CD4-positive, alpha-beta memory T cell (primary cell): ENCODE measurements at regions of chr19 and their contacts with region 1.

Region 1: GRCh38 chr19:5904352-5905113 is at the start of gene VMAC:
- DNase-seq: peak; percentile 100
- H3K4me3 ChIP-seq: peak within 1 kb of the TSS; percentile 97
- H3K4me3 Mint-ChIP-seq: peak within 1 kb of the TSS; percentile 91 to 97 (median 95)
- H3K27ac ChIP-seq: peak within 1 kb of the TSS; percentile 95
- H3K27ac Mint-ChIP-seq: peak within 1 kb of the TSS; percentile 95 to 100 (median 100)
- H3K4me1 ChIP-seq: peaks cover 37% of the 10 kb centered on the region
- H3K4me1 Mint-ChIP-seq: peaks cover 14 to 57% (median 35%) of the 10 kb centered on the region in 4 donors
- H3K27me3 ChIP-seq: no peaks in the 10 kb centered on the region
- H3K27me3 Mint-ChIP-seq: no peaks in the 10 kb centered on the region
- total RNA-seq, gene VMAC: 36.6 to 37.5 TPM

Region 2: DNA sequence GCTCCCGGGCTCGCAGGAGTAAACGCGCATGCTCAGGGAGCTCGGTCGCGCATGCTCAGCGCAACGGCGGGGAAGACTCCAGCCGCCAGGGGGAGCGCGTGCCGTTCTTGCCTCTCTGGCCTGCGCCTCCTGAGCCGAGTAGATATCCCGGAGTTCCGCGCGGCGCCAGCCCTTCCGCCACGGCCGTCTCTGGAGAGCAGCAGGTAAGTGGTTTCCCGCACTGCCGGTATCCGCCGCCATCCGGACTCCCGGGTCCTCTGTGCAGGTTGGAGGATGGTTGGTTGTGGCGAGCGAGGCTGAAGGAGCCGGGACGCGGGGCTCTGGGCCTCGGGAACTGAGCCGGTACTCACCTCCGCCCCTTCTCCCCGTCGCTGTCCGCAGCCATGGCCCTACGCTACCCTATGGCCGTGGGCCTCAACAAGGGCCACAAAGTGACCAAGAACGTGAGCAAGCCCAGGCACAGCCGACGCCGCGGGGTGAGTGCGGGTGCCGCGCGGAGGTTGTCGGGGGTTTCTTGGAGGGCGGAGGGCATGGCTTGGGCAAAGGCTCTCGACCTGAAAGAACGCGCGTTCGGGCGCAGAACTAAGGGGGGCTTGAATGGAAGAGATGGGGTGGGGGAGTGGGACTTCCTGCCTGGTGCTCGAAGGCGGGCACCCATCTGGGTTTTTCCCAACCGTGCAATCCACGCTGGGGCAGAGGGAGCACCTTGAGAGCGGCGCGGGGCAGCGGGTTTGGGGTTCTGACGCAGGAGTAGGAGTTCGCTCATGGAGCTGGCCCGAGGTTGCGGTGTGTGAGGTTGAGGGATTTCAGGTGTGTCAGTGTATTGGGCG is 214.2 kb before region 1 on chr19 and contains the start of gene RPL36:
- CTCF ChIA-PET with region 1: interaction called, 3 read pairs
- POLR2A ChIA-PET with region 1: interaction called, 7 read pairs
- intact Hi-C with region 1: loop called (anchors 1 kb)
- DNase-seq: peak; percentile 97 to 99 (median 98)
- H3K4me3 ChIP-seq: peak within 1 kb of the TSS; percentile 84 to 86
- H3K4me3 Mint-ChIP-seq: peak within 1 kb of the TSS; percentile 92 to 97 (median 94)
- H3K27ac ChIP-seq: peak within 1 kb of the TSS; percentile 83
- H3K27ac Mint-ChIP-seq: peak within 1 kb of the TSS; percentile 94 to 100 (median 97)
- H3K4me1 ChIP-seq: peaks cover 36% of the 10 kb centered on the region
- H3K4me1 Mint-ChIP-seq: peaks cover 19 to 46% (median 31%) of the 10 kb centered on the region in 4 donors
- H3K27me3 ChIP-seq: no peaks in the 10 kb centered on the region
- H3K27me3 Mint-ChIP-seq: no peaks in the 10 kb centered on the region
- total RNA-seq, gene RPL36: 1,675 to 1,762 TPM

Region 3: GRCh38 chr19:5803752-5804515 is 100.6 kb before region 1 on chr19:
- CTCF ChIA-PET with region 1: interaction called, 16 read pairs
- POLR2A ChIA-PET with region 1: interaction called, 13 read pairs
- intact Hi-C with region 1: loop called (anchors 1 kb)
- DNase-seq: peak; percentile 89 to 93 (median 91)
- H3K4me3 ChIP-seq: peak overlapping the region in 1 of 2 donors; percentile 40
- H3K4me3 Mint-ChIP-seq: peak overlapping the region; percentile 59 to 91 (median 76)
- H3K27ac ChIP-seq: peak overlapping the region; percentile 19
- H3K27ac Mint-ChIP-seq: peak overlapping the region; percentile 57 to 92 (median 87)
- H3K4me1 ChIP-seq: peaks cover 20% of the 10 kb centered on the region
- H3K4me1 Mint-ChIP-seq: peaks cover 6 to 30% (median 15%) of the 10 kb centered on the region in 4 donors
- H3K27me3 ChIP-seq: no peaks in the 10 kb centered on the region
- H3K27me3 Mint-ChIP-seq: peaks cover 13 to 14% of the 10 kb centered on the region in 2 donors

Region 4: GRCh38 chr19:5864725-5865486 is 39.6 kb before region 1 on chr19:
- CTCF ChIA-PET with region 1: no interaction called
- POLR2A ChIA-PET with region 1: no interaction called
- intact Hi-C with region 1: no loop called
- DNase-seq: no peak
- H3K4me3 ChIP-seq: no peak overlapping the region
- H3K4me3 Mint-ChIP-seq: no peak overlapping the region
- H3K27ac ChIP-seq: no peak overlapping the region
- H3K27ac Mint-ChIP-seq: peak overlapping the region in 1 of 7 donors; percentile 35
- H3K4me1 ChIP-seq: no peaks in the 10 kb centered on the region
- H3K4me1 Mint-ChIP-seq: no peaks in the 10 kb centered on the region
- H3K27me3 ChIP-seq: no peaks in the 10 kb centered on the region
- H3K27me3 Mint-ChIP-seq: peaks cover 2 to 5% of the 10 kb centered on the region in 2 donors

Region 5: DNA sequence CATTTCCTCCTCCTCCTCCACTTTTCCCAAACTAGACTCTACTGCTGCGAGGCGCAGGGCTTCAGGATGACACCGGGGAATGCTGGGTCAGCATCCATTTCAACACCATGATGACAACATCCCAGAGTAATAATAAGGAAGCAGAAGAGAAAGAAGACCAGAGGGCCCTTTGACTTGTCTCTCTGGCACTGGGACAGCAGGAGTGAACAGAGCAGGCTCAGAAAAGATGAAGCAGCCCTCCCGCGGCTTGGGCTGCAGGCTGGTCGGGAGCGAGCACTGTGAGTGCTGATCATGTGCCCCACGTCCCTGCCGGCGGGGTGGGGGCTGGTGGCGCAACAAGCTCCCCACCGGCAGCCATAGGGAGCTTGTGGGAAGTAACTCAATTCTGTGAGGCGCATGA is 42.9 kb after region 1 on chr19:
- CTCF ChIA-PET with region 1: interaction called, 4 read pairs
- POLR2A ChIA-PET with region 1: interaction called, 21 read pairs
- intact Hi-C with region 1: no loop called
- DNase-seq: no peak
- H3K4me3 ChIP-seq: no peak overlapping the region
- H3K4me3 Mint-ChIP-seq: peak overlapping the region in 3 of 8 donors; percentile 38 to 61 (median 40)
- H3K27ac ChIP-seq: no peak overlapping the region
- H3K27ac Mint-ChIP-seq: peak overlapping the region in 6 of 7 donors; percentile 36 to 94 (median 82)
- H3K4me1 ChIP-seq: peaks cover 63% of the 10 kb centered on the region
- H3K4me1 Mint-ChIP-seq: peaks cover 50 to 76% (median 65%) of the 10 kb centered on the region in 4 donors
- H3K27me3 ChIP-seq: no peaks in the 10 kb centered on the region
- H3K27me3 Mint-ChIP-seq: no peaks in the 10 kb centered on the region

Region 6: GRCh38 chr19:5977785-5978605 is 73.5 kb after region 1 on chr19 and contains the start of gene RANBP3:
- CTCF ChIA-PET with region 1: interaction called, 6 read pairs
- POLR2A ChIA-PET with region 1: interaction called, 43 read pairs
- intact Hi-C with region 1: loop called (anchors 1 kb)
- DNase-seq: peak; percentile 98 to 100 (median 99)
- H3K4me3 ChIP-seq: peak within 1 kb of the TSS; percentile 78 to 81
- H3K4me3 Mint-ChIP-seq: peak within 1 kb of the TSS; percentile 91 to 99 (median 94)
- H3K27ac ChIP-seq: peak within 1 kb of the TSS; percentile 84
- H3K27ac Mint-ChIP-seq: peak within 1 kb of the TSS; percentile 95 to 97 (median 96)
- H3K4me1 ChIP-seq: peaks cover 65% of the 10 kb centered on the region
- H3K4me1 Mint-ChIP-seq: peaks cover 38 to 71% (median 50%) of the 10 kb centered on the region in 4 donors
- H3K27me3 ChIP-seq: no peaks in the 10 kb centered on the region
- H3K27me3 Mint-ChIP-seq: no peaks in the 10 kb centered on the region
- total RNA-seq, gene RANBP3: 84.1 to 94.9 TPM

Region 7: DNA sequence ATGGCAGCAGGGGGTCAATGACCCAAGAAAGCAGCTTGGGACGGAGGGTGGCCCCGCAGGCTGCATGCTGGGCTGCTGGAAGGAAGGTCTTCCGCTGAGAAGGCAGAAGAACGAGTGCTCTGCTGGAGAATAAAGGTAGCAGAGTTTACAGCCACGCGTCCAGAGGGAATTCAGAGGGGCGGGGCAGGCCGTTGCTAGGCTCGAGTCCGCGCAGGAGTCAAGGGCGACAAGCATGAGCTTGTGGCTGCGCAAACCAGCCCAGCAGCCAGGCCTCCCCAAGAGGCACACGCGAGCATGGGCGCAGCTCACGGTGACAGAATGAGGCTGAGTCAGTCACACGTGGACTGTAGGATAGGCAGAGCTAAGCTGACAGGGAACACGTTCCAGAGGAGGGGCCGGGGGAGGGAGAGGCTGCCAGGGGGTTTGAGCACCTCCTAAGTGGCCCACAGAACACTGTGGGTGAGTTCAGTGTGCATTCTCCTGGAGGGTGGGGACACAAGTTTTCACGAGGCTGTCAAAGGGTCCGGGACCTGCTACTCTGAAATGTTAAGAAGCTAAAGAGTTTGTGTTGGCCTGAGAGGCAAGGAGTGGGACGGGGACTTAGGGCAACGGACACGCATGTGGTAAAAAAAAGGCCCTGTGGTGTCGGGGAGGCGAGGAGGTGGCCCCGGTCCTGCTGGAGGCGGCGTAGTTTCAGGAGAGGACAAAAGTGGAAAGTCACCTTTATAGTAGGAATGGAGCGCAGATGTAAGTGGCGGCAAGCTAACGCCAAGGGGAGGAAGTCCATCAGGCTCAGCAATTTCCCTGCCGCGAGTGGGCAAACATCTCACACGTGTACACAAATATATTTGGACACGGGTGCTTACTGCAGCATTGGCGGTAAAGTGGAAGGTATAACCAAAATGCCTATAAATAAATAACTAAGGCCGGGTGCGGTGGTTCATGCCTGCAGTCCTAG is 188.1 kb after region 1 on chr19:
- CTCF ChIA-PET with region 1: no interaction called
- POLR2A ChIA-PET with region 1: no interaction called
- intact Hi-C with region 1: no loop called
- DNase-seq: no peak
- H3K4me3 ChIP-seq: no peak overlapping the region
- H3K4me3 Mint-ChIP-seq: no peak overlapping the region
- H3K27ac ChIP-seq: no peak overlapping the region
- H3K27ac Mint-ChIP-seq: peak overlapping the region in 1 of 7 donors; percentile 7
- H3K4me1 ChIP-seq: peaks cover 4% of the 10 kb centered on the region
- H3K4me1 Mint-ChIP-seq: peaks cover 3 to 8% (median 6%) of the 10 kb centered on the region in 4 donors
- H3K27me3 ChIP-seq: no peaks in the 10 kb centered on the region
- H3K27me3 Mint-ChIP-seq: peaks cover 0 to 1% of the 10 kb centered on the region in 2 donors

Region 8: GRCh38 chr19:7535035-7535992 is 1630.8 kb after region 1 on chr19 and contains the start of gene PNPLA6:
- CTCF ChIA-PET with region 1: no interaction called
- POLR2A ChIA-PET with region 1: no interaction called
- intact Hi-C with region 1: loop called (anchors 10 kb)
- DNase-seq: peak; percentile 89 to 93 (median 91)
- H3K4me3 ChIP-seq: peak within 1 kb of the TSS; percentile 80 to 93
- H3K4me3 Mint-ChIP-seq: peak within 1 kb of the TSS; percentile 90 to 98 (median 94)
- H3K27ac ChIP-seq: peak within 1 kb of the TSS; percentile 76
- H3K27ac Mint-ChIP-seq: peak within 1 kb of the TSS; percentile 93 to 98 (median 94)
- H3K4me1 ChIP-seq: peaks cover 25% of the 10 kb centered on the region
- H3K4me1 Mint-ChIP-seq: peaks cover 10 to 45% (median 26%) of the 10 kb centered on the region in 4 donors
- H3K27me3 ChIP-seq: no peaks in the 10 kb centered on the region
- H3K27me3 Mint-ChIP-seq: no peaks in the 10 kb centered on the region
- total RNA-seq, gene PNPLA6: 168 to 169 TPM